Activated CD4-positive, alpha-beta T cell treated with anti-CD3 and anti-CD28 coated beads, Interleukin-2, amount 10 ng/mL, durations not matched to agents 24 days and 14 days (primary cell): ENCODE measurements at regions of chr16 and their contacts with region 1.

Region 1: DNA sequence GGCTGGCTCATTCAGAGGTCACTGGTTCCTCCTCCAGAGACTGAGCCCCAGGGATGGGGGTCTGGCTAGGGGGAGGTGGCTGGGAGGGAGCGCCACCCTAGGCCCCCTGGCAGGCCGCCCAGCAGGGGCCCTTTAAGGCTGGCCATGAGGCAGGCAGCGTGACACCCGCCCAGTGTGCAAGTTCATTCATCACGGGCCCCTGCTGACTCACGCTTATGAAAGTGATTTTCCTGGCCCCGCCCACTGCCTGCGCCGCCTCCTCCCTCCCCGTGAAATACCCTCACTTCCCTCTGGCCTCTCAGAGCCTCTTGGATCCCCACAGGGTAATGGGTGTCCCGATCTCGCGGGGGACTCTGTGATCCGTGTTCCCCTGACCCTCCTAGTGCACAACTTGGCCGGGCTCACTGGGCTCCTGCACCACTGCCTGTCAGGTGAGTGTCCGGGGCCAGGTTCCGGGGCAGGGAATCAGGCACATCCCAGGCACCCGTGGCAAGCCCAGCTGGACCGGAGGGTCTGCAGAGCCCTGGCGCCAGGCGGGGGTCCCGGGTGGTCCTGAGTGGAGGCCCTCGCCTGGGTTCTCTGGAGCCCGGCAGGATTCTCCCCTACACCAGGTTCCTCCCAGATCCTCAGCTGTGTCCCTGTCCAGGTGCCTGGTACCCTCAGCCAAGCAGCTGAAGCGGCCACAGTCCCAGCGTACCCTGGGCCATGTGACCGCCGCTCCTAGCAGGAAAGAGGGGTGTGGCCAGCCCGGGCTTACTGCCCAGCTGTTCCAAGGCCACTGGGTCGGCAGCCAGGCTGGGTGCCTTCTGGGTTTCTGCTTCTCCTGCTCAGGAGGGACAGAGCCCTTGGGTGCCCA is at the start of gene OSGIN1:
- DNase-seq: peak; percentile 91
- H3K4me3 Mint-ChIP-seq: peak within 1 kb of the TSS; percentile 82
- H3K27ac Mint-ChIP-seq: peak within 1 kb of the TSS; percentile 72
- H3K4me1 Mint-ChIP-seq: peaks cover 14% of the 10 kb centered on the region
- H3K27me3 Mint-ChIP-seq: peaks cover 8% of the 10 kb centered on the region
- total RNA-seq, gene OSGIN1: 0.72 and 1.3 TPM in 2 replicates

Region 2: DNA sequence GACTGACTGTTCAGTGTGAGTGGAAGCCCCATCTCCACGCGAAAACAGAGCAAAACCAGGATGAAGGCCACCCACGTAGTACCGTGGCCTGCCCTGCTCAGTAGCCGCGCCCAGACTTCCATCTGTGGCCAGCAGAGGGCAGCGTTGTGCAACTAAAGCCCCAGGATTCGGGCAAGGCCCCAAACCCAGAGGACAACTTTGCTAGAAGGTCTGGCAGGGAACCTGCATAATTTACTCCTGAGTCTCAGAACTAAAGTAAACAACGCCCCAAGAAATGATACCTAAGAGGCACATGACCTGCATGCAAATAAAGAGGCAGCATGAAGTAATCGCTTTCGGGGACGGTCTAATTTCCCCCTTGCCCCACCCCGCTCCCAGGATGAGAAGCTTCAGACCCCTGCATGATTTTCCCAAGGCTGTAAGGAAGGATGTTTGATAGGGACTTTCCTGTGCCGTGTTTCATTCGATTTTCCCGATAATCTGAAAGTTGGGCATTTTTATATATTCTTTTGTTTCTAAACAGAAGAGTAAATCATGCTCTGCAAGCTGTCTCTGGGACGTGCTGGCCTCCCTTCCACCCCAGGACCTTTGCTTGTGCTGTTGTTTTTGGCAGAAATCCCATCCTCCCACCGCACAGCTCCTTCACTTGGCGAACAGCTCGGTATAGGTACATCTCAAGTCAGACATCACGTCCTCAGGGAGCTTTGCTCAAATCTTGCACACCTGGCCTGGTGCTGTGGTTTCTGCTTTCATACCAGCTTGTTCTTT is 126.8 kb before region 1 on chr16:
- intact Hi-C with region 1: loop called (anchors 2 kb)
- DNase-seq: peak; percentile 95
- H3K4me3 Mint-ChIP-seq: no peak overlapping the region
- H3K27ac Mint-ChIP-seq: no peak overlapping the region
- H3K4me1 Mint-ChIP-seq: peaks cover 5% of the 10 kb centered on the region
- H3K27me3 Mint-ChIP-seq: peaks cover 2% of the 10 kb centered on the region

Region 3: DNA sequence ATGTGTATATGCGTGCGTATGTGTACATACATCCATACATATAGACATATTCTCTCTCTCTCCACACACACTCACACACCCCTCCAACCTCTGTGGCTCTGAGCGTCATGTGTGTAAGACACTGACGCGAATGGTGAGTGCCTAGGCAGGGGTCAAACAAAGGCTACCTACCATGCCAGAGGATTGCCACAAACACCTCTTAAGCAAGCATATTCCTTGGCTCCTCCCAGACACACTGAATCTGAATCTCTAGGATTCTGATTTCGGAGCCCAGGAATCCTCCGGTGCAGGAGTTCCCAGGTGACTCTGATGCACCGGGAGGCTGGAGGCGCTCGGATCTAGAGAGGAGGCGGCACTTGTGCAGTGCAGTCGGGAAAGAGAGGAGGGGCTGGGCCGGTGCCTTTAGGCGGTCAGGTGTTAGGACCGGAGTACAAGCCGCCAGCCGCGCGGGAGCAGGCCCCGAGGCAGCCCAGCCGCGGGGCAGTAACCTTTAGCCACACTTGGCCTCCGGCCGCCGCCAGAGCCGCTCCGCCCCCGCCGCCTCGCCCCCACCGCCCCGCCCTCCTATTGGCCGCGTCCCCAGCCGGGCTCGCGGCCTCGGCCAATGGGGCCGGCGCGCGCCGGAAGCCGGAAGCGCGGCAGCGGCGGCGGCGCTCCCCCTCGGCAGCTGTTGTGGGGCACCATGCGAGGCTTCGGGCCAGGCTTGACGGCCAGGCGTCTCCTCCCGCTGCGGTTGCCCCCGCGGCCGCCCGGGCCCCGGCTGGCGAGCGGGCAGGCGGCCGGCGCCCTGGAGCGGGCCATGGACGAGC is 54.5 kb before region 1 on chr16 and contains the start of gene MLYCD:
- intact Hi-C with region 1: loop called (anchors 1 kb)
- DNase-seq: peak; percentile 94
- H3K4me3 Mint-ChIP-seq: peak within 1 kb of the TSS; percentile 94
- H3K27ac Mint-ChIP-seq: peak within 1 kb of the TSS; percentile 88
- H3K4me1 Mint-ChIP-seq: peaks cover 17% of the 10 kb centered on the region
- H3K27me3 Mint-ChIP-seq: peaks cover 13% of the 10 kb centered on the region
- total RNA-seq, gene MLYCD: 5.0 and 5.3 TPM in 2 replicates

Region 4: DNA sequence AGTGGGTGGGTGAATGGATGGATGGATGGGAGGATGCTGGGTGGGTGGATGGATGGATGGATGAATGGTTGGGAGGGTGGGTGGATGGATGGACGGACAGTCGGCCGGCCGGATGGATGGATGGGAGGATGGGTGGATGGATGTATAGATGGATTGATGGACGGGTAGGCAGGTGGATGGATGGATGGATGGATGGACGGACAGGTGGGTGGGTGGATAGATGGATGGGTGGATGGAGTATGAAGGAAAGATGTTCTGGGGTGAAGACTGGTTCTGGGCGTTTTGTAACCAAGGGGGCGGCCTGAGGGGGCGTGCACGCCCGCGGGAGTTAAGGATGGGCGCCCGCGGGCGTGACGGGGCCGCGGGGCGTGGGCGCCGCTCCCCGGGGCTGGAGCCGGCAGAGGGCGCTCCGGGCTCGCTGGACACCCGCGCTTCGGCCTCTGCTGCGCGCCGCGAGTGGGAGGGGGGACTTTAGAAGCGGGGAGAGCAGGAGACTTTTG is 14.7 kb after region 1 on chr16 and contains the start of gene NECAB2:
- intact Hi-C with region 1: no loop called
- DNase-seq: peak; percentile 67
- H3K4me3 Mint-ChIP-seq: peak within 1 kb of the TSS; percentile 11
- H3K27ac Mint-ChIP-seq: no peak within 1 kb of the TSS
- H3K4me1 Mint-ChIP-seq: peaks cover 4% of the 10 kb centered on the region
- H3K27me3 Mint-ChIP-seq: peaks cover 15% of the 10 kb centered on the region
- total RNA-seq, gene NECAB2: not detected in 2 replicates

Region 5: GRCh38 chr16:84065536-84066132 is 112.5 kb after region 1 on chr16:
- intact Hi-C with region 1: loop called (anchors 1 kb)
- DNase-seq: peak; percentile 81
- H3K4me3 Mint-ChIP-seq: no peak overlapping the region
- H3K27ac Mint-ChIP-seq: no peak overlapping the region
- H3K4me1 Mint-ChIP-seq: peaks cover 7% of the 10 kb centered on the region
- H3K27me3 Mint-ChIP-seq: no peaks in the 10 kb centered on the region

Region 6: DNA sequence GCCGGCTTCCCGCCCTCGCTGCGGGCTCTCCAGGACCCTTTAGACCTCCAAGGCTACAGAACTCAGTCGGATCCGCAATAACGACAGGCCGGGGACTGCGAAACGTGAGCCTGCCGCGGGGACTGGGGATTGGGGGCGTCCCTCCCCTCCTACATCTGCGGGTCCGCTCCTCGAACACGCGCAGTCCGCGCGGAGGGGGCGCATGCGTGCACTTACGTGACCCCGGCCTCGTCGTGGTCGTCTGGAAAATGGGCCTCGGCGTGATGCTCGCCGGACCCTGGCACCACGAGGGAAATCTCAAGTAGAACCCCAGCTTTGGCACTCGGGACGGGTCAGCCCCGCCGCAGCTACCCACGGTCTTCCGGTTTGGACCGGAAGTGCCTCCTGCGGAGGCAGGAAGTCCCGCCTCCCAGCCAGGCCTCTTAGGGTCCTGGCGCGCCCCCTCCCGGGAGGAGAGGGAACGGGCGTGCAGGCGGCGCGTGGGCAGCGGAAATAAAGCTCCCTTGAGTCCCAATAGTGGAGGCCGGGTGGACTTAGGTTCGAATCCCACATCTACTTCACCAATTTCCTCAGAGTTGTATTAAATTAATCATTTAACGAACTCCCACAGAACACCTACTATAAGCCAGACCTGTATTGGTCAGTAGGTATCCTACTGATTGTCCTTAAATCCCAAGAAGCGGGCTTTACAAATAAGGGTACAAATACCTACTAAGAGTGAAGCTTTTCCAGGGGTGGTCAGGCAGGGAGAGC is 233.7 kb after region 1 on chr16 and contains the start of gene TAF1C:
- intact Hi-C with region 1: loop called (anchors 5 kb)
- DNase-seq: peak; percentile 97
- H3K4me3 Mint-ChIP-seq: peak within 1 kb of the TSS; percentile 94
- H3K27ac Mint-ChIP-seq: peak within 1 kb of the TSS; percentile 95
- H3K4me1 Mint-ChIP-seq: peaks cover 18% of the 10 kb centered on the region
- H3K27me3 Mint-ChIP-seq: no peaks in the 10 kb centered on the region
- total RNA-seq, gene TAF1C: 60.3 and 61.1 TPM in 2 replicates

Region 7: DNA sequence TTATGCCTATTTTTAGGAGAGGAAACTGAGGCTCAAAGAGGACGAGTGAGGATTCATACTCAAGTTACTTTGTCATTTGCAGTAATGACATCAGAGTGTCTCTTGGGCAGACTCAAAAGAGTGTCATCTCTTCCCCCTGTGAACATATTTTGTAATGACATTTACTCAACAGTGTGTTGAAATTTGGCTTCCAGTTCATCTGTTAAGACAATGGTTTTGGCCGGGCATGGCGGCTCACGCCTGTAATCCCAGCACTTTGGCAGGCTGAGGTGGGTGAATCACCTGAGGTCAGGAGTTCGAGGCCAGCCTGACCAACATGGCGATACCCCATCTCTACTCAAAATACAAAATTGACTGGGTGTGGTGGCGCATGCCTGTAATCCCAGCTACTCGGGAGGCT is 370.5 kb after region 1 on chr16:
- intact Hi-C with region 1: no loop called
- DNase-seq: no peak
- H3K4me3 Mint-ChIP-seq: no peak overlapping the region
- H3K27ac Mint-ChIP-seq: no peak overlapping the region
- H3K4me1 Mint-ChIP-seq: no peaks in the 10 kb centered on the region
- H3K27me3 Mint-ChIP-seq: peaks cover 2% of the 10 kb centered on the region

Region 8: DNA sequence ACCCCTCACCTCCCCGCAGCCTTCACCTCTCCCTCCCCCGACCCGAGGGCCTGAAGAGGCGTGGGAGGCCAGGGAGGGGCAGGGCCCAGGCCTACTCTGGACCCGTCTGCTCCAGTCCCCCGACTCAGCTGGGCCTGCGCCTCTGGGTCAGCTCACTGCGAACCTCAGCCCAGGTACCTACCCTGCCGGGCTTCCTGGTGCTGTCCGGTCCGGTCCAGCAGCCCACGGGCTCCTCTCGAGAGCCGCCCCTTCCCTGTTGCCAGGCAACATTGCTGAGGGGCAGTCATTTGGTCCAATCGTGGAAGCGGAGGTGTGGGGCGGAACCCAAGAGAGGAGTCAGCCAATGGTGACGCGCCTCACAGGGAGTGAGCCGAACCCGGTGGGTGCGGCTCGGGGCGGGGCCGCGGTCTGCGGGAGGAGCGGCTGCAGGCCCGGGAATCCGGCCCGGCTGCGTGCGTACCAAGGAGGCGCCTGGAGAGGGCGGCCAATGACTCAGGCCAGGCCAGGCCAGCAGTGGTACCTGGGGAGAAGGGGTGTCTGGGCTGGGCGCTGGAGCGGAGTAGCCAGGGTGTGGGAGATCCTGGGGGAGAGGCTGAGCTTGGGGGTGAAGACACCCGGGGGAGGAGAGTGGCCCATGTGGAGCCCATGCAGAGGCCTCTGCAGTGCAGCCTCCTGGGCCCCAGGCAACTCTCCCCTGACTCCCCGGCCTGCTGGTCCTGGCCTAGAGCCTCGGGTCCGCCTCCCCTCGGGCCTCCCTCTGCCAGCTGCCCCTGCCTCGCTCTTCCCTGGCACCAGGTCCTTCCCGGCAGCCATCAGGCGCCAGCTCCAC is 551.5 kb after region 1 on chr16 and contains the start of gene MEAK7:
- intact Hi-C with region 1: loop called (anchors 10 kb)
- DNase-seq: peak; percentile 100
- H3K4me3 Mint-ChIP-seq: peak within 1 kb of the TSS; percentile 83
- H3K27ac Mint-ChIP-seq: peak within 1 kb of the TSS; percentile 87
- H3K4me1 Mint-ChIP-seq: peaks cover 41% of the 10 kb centered on the region
- H3K27me3 Mint-ChIP-seq: no peaks in the 10 kb centered on the region
- total RNA-seq, gene MEAK7: 11.7 and 12.5 TPM in 2 replicates